Vagina (tissue), 2 donors: ENCODE measurements at regions of chr6 and their contacts with region 1.

Region 1: DNA sequence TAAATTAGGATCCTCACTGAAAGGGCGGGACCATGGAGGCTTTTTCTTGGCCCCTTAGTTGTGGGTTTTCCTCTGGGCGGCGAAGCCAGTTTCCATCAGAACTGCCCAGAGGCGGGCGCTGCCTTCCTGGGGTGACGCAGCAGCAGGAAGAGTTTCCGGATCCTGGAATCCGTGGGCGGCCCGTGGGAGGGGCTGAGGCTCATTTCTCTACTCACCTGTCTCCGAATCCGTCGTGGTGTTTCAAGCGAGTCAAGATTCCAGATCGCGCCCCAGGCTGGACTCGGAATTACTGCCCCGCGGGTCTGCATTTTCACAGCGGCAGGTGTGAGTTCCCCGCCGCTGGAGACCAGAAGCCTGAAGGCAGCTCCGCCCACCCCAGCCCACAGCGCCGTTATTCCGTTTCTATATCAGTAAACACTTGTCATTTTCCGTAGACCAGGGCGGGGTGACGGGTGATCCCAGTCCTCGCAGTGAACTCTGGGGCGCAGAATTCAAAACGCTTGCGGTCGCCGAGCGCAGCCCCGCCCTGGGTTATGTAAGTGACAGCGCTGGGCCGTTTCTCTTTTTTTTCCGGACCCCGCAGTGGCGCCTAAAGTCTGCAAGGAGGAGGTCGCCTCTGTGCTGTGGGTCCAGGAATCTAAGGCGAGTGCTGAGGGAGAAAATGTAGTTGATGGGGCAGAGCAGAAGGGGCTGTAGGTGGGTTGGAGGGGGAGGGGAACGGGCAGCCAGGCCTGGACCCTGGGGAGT is 27.2 kb upstream of the POU5F1 start:
- DNase-seq: no peak
- H3K4me3 ChIP-seq: peak overlapping the region; percentile 60 to 71
- H3K27ac ChIP-seq: peak overlapping the region; percentile 93
- H3K4me1 ChIP-seq: peaks cover 12% of the 10 kb centered on the region
- H3K27me3 ChIP-seq: no peaks in the 10 kb centered on the region
- CTCF ChIP-seq: no peak
- POLR2A ChIP-seq: peak in 1 of 2 donors; percentile 71

Region 2: GRCh38 chr6:31366693-31367470 is 169.2 kb after region 1 on chr6:
- intact Hi-C with region 1: loop called (anchors 5 kb)
- DNase-seq: no peak
- H3K4me3 ChIP-seq: peak overlapping the region; percentile 24 to 33
- H3K27ac ChIP-seq: no peak overlapping the region
- H3K4me1 ChIP-seq: no peaks in the 10 kb centered on the region
- H3K27me3 ChIP-seq: no peaks in the 10 kb centered on the region
- CTCF ChIP-seq: peak; percentile 92 to 99 (median 93)
- POLR2A ChIP-seq: no peak